GM10248 (cell line): ENCODE measurements at regions of chrX and their contacts with region 1.

Region 1: GRCh38 chrX:81206476-81206875 is 4.6 kb downstream of the SH3BGRL start:
- DNase-seq: no peak
- CTCF ChIP-seq: no peak

Region 2: DNA sequence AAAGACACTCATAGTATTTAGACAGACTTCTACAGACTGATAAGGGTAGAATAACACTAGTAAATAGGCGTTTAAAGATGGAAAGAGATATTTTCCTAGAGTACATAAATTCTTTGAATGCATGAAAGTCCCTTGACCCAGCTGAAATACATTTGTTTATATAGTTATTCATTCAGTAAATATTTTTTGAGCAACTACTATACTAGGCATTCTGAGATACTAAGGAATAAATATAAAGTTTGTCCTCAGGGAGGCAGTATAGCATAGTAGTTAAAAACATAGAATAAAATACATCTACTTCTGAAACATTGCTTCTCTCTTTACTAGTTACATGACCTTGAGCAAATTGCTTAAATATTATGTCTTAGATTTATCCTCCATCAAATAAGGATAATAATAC is 32.2 kb before region 1 on chrX:
- CTCF ChIA-PET with region 1: no interaction called
- POLR2A ChIA-PET with region 1: no interaction called
- DNase-seq: no peak
- CTCF ChIP-seq: peak; percentile 31

Region 3: DNA sequence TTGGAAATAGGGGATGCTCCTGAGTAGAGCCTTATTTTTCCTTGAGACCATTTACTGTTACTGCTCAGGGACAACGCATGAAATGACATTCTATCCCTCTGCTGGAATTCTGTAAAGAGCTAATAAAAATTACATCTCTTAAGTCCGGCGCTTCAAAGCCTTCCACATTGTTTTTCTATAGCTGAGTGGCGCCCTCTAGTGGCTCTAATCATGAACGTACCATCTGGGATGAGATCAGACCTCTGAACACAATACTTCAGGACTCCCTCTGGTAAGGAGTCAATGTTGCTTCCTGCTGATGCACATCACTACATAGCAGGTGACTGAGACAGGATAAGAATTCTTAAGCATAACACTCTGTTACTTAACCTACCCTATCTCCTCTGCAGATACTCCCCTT is 10.8 kb before region 1 on chrX:
- CTCF ChIA-PET with region 1: interaction called, 10 read pairs
- POLR2A ChIA-PET with region 1: no interaction called
- DNase-seq: no peak
- CTCF ChIP-seq: peak; percentile 50

Region 4: GRCh38 chrX:81270692-81271091 is 64.2 kb after region 1 on chrX:
- CTCF ChIA-PET with region 1: no interaction called
- POLR2A ChIA-PET with region 1: no interaction called
- DNase-seq: no peak
- CTCF ChIP-seq: no peak